ENCODE measurements at regions of chr3 and their contacts with region 1.

Region 1: GRCh38 chr3:191051037-191051436 is 148.0 kb upstream of the OSTN start:
- DNase-seq: no peak
- H3K4me3 ChIP-seq: no peak overlapping the region
- H3K27ac ChIP-seq: no peak overlapping the region
- H3K27me3 ChIP-seq: peaks cover 0 to 2% (median 0%) of the 10 kb centered on the region in 45 donors
- CTCF ChIP-seq: peak; percentile 44 to 81 (median 66)

Region 2: GRCh38 chr3:190811775-190812480 is 239.1 kb before region 1 on chr3:
- intact Hi-C with region 1: loop called (anchors 5 kb)
- DNase-seq: peak in 3 of 10 donors; percentile 19 to 41 (median 35)
- H3K4me3 ChIP-seq: peak overlapping the region in 51 of 59 donors; percentile 1 to 59 (median 30)
- H3K27ac ChIP-seq: no peak overlapping the region
- H3K27me3 ChIP-seq: peaks cover 0 to under 1% (median 0%) of the 10 kb centered on the region in 45 donors
- CTCF ChIP-seq: peak; percentile 38 to 80 (median 65)

Region 3: GRCh38 chr3:190883973-190884832 is 166.8 kb before region 1 on chr3:
- intact Hi-C with region 1: loop called (anchors 10 kb)
- DNase-seq: peak in 7 of 10 donors; percentile 25 to 69 (median 42)
- H3K4me3 ChIP-seq: peak overlapping the region in 1 of 59 donors; percentile 13
- H3K27ac ChIP-seq: no peak overlapping the region
- H3K27me3 ChIP-seq: no peaks in the 10 kb centered on the region
- CTCF ChIP-seq: peak; percentile 40 to 92 (median 80)